Naive thymus-derived CD4-positive, alpha-beta T cell (primary cell): ENCODE measurements at regions of chr14 and their contacts with region 1.

Region 1: DNA sequence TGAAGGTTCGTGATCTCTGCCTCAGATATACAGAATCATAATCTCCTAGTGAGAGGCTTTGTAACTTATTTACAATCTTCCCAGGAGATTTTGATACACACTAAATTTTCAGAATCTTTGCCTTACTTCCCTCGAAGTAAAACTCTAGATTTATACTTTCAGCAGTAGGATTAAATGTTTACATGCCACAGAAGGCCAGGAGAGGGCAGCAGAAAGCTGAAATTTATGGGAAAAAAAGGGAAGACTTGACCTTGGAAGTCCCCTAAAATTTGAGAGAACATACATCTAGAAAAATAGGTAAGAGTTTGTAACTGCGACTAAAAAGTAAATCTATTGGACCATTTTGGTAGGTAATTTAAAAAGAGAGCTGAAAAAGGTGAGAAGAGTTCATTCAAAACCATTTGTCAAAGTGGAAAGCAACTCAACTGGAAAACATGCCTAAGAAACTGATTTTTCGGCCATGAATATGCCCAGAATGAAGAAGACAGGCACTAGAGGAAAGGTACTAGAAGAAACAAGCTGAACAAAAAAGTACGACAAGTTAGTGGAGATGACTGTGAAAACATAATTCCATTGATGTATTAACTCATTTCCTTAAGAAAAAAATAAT is 242.0 kb upstream of the MDGA2 start:
- DNase-seq: no peak
- ATAC-seq: no peak
- H3K4me3 ChIP-seq: no peak overlapping the region
- H3K4me3 Mint-ChIP-seq: no peak overlapping the region
- H3K27ac ChIP-seq: no peak overlapping the region
- H3K27ac Mint-ChIP-seq: no peak overlapping the region
- H3K4me1 ChIP-seq: no peaks in the 10 kb centered on the region
- H3K4me1 Mint-ChIP-seq: no peaks in the 10 kb centered on the region
- H3K27me3 ChIP-seq: no peaks in the 10 kb centered on the region
- H3K27me3 Mint-ChIP-seq: no peaks in the 10 kb centered on the region

Region 2: GRCh38 chr14:47526591-47527244 is 390.7 kb before region 1 on chr14:
- CTCF ChIA-PET with region 1: no interaction called
- POLR2A ChIA-PET with region 1: no interaction called
- intact Hi-C with region 1: no loop called
- DNase-seq: no peak
- ATAC-seq: no peak
- H3K4me3 ChIP-seq: no peak overlapping the region
- H3K4me3 Mint-ChIP-seq: no peak overlapping the region
- H3K27ac ChIP-seq: no peak overlapping the region
- H3K27ac Mint-ChIP-seq: no peak overlapping the region
- H3K4me1 ChIP-seq: no peaks in the 10 kb centered on the region
- H3K4me1 Mint-ChIP-seq: no peaks in the 10 kb centered on the region
- H3K27me3 ChIP-seq: no peaks in the 10 kb centered on the region
- H3K27me3 Mint-ChIP-seq: no peaks in the 10 kb centered on the region

Region 3: GRCh38 chr14:49173765-49174373 is 1256.4 kb after region 1 on chr14:
- CTCF ChIA-PET with region 1: no interaction called
- POLR2A ChIA-PET with region 1: no interaction called
- intact Hi-C with region 1: loop called in 1 of 2 experiments (anchors 5 kb)
- DNase-seq: peak in 2 of 9 donors; percentile 11 to 35
- ATAC-seq: no peak
- H3K4me3 ChIP-seq: no peak overlapping the region
- H3K4me3 Mint-ChIP-seq: no peak overlapping the region
- H3K27ac ChIP-seq: no peak overlapping the region
- H3K27ac Mint-ChIP-seq: no peak overlapping the region
- H3K4me1 ChIP-seq: no peaks in the 10 kb centered on the region
- H3K4me1 Mint-ChIP-seq: no peaks in the 10 kb centered on the region
- H3K27me3 ChIP-seq: no peaks in the 10 kb centered on the region
- H3K27me3 Mint-ChIP-seq: peaks cover 0 to 27% (median 6%) of the 10 kb centered on the region in 5 donors